Common myeloid progenitor, CD34-positive (primary cell): ENCODE measurements at regions of chr5 and their contacts with region 1.

Region 1: GRCh38 chr5:140664359-140665119 is at the start of gene WDR55:
- DNase-seq: peak; percentile 95 to 97 (median 95)
- H3K4me3 ChIP-seq: peak within 1 kb of the TSS; percentile 77 to 97 (median 84)
- H3K27ac ChIP-seq: peak within 1 kb of the TSS; percentile 67 to 93
- H3K4me1 ChIP-seq: peaks cover 0 to 13% (median 9%) of the 10 kb centered on the region in 4 experiments
- H3K27me3 ChIP-seq: no peaks in the 10 kb centered on the region

Region 2: DNA sequence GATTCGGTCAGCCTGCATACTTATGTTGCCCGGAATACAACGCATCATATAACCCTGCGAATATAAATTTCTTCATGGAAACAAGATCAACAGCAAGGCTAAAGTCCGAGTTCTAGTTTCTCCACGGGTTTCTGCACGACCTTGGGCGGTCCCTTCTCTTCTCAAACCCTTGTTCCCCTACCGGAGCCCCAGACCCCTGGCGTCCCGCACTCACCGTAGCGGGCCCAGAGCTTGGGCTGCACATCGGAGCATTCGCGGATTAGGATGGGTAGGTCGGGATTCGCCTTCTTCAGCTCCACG is 17.5 kb before region 1 on chr5:
- CTCF ChIA-PET with region 1: interaction called, 7 read pairs
- POLR2A ChIA-PET with region 1: interaction called, 10 read pairs
- DNase-seq: no peak
- H3K4me3 ChIP-seq: peak overlapping the region; percentile 84 to 98 (median 94)
- H3K27ac ChIP-seq: peak overlapping the region; percentile 96 to 98
- H3K4me1 ChIP-seq: peaks cover 0 to 19% (median 16%) of the 10 kb centered on the region in 4 experiments
- H3K27me3 ChIP-seq: no peaks in the 10 kb centered on the region